AG04450 (cell line): ENCODE measurements at regions of chr7 and their contacts with region 1.

Region 1: DNA sequence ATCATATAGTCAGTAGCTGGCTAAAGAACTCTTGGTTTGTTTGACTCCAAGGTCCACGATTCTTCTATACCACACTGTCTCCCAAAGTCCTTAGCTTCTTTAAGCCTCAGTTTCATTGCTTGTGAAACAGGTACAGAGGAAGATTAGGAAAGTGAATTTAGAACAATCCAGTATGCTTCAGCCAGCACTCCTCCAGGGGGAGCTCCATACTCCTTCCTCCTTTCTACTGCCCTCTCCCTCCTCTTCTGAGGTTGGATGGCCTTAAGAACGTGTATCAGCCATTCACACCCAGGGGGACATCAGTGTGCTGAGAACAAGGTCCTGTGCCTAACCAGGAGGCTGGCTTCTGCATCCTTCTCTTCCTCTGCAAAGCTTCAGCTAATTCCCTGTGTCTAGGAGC is 54.8 kb upstream of the CALD1 start:
- DNase-seq: no peak
- H3K4me3 ChIP-seq: no peak overlapping the region
- H3K27ac ChIP-seq: no peak overlapping the region
- H3K27me3 ChIP-seq: no peaks in the 10 kb centered on the region
- CTCF ChIP-seq: peak; percentile 66

Region 2: DNA sequence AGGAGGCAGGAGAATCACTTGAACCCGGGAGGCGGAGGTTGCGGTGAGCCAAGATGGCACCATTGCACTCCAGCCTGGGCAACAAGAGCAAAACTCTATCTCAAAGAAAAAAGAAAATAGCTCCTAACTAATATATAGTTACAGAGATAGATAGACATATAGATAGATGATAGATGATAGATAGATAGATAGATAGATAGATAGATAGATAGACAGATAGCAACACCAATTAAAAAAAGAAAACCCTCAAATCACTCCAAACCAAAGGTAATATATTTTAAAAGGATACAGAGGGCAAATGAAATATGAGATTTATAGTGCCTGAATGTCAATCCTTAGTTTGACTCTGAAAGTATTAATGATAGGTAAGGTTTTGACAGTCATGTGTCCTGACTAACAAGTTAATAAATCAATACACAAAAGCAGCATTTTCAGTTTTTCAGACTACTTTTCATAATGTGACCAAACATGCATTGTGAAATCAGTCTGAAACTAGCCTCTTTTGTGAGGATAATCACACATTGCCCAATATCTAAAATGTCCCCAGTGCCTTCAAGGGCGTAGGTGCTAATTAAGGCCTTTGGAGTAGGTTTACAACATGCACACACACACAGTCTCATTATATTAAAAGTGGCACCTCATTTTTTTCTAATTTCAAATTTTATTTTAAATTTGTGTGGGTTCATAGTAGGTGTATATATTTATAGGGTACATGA is 16.8 kb before region 1 on chr7:
- CTCF ChIA-PET with region 1: interaction called, 12 read pairs
- POLR2A ChIA-PET with region 1: interaction called, 4 read pairs
- DNase-seq: no peak
- H3K4me3 ChIP-seq: no peak overlapping the region
- H3K27ac ChIP-seq: no peak overlapping the region
- H3K27me3 ChIP-seq: no peaks in the 10 kb centered on the region
- CTCF ChIP-seq: no peak

Region 3: DNA sequence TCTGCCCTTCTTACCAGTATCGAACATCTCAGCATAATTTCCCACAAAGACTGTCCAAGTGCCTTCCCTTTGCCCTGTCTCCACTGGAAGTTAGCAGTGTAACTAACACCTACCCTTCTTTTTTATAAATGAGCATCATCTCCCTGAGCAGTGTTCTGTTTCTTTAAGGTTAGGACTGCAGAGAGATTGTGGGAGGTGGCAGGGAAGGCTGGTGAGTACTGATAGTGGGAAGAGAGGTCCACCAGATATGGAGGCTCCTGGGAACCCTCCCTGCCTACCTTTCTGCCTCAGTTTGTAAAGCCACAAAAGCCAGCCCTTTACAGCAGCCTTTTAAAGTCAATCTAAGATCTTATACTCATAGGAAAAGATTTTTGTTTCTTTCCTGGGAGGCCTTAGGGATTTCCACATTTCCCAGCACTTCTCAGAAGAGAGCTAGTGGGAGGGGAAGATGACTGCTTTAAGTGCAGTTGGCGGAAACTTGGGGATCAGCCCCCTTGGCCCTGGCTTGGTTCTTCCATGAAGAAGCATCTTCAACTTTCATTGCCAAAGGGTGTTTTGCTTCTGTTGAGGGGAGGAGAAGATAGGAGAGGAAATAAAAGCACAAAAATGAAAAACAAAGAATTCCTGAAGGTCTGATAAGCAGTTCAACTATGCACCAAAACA is 18.2 kb after region 1 on chr7:
- CTCF ChIA-PET with region 1: interaction called, 12 read pairs
- POLR2A ChIA-PET with region 1: interaction called, 6 read pairs
- DNase-seq: no peak
- H3K4me3 ChIP-seq: no peak overlapping the region; the same call in 1 of the 2 replicates
- H3K27ac ChIP-seq: peak overlapping the region; percentile 92
- H3K27me3 ChIP-seq: no peaks in the 10 kb centered on the region
- CTCF ChIP-seq: no peak

Region 4: DNA sequence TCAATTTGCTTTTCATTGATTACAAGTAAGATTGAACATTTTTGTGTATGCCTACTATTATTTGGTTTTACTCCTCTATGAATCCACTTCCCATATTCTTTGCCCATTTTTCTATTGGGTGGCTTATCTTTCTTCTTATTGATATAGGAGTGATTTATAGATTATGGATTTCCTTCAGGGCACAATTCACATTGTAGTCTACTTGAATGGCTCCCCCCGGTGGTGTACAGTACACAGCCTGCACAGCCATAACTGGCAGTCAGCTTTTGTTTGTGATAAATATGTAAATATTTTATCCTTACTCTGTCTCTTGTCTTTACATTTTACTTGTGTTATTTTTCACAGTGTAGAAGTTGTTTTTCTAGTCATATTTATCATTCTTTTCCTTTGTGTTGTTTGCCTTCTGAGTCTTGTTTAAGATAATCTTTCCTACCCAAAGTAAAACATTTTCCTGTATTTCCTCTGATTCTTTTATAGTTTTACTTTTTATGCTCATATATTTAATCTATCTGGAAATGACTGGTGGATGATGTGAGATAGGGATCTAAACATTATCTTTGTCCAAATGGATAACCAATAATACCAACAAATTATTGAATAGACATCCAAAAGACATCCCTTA is 30.9 kb after region 1 on chr7:
- CTCF ChIA-PET with region 1: interaction called, 23 read pairs
- POLR2A ChIA-PET with region 1: no interaction called
- DNase-seq: no peak
- H3K4me3 ChIP-seq: no peak overlapping the region
- H3K27ac ChIP-seq: no peak overlapping the region
- H3K27me3 ChIP-seq: no peaks in the 10 kb centered on the region
- CTCF ChIP-seq: peak; percentile 83